Naive thymus-derived CD4-positive, alpha-beta T cell (primary cell): ENCODE measurements at regions of chr14 and their contacts with region 1.

Region 1: GRCh38 chr14:50060871-50061663 is 55.3 kb downstream of the VCPKMT start:
- DNase-seq: peak in 2 of 9 donors; percentile 27 to 61
- ATAC-seq: no peak
- H3K4me3 ChIP-seq: peak overlapping the region; percentile 53
- H3K4me3 Mint-ChIP-seq: peak overlapping the region; percentile 74 to 94 (median 89)
- H3K27ac ChIP-seq: peak overlapping the region; percentile 79
- H3K27ac Mint-ChIP-seq: peak overlapping the region; percentile 96 to 100 (median 99)
- H3K4me1 ChIP-seq: peaks cover 61 to 69% of the 10 kb centered on the region in 2 donors
- H3K4me1 Mint-ChIP-seq: peaks cover 70 to 93% (median 89%) of the 10 kb centered on the region in 7 donors
- H3K27me3 ChIP-seq: no peaks in the 10 kb centered on the region
- H3K27me3 Mint-ChIP-seq: no peaks in the 10 kb centered on the region

Region 2: GRCh38 chr14:49633640-49634546 is 427.2 kb before region 1 on chr14:
- CTCF ChIA-PET with region 1: interaction called, 6 read pairs
- POLR2A ChIA-PET with region 1: no interaction called
- intact Hi-C with region 1: loop called in 1 of 2 experiments (anchors 1 kb)
- DNase-seq: peak; percentile 89 to 96 (median 93)
- ATAC-seq: peak; percentile 92
- H3K4me3 ChIP-seq: peak overlapping the region; percentile 99
- H3K4me3 Mint-ChIP-seq: peak overlapping the region; percentile 81 to 99 (median 96)
- H3K27ac ChIP-seq: peak overlapping the region; percentile 96
- H3K27ac Mint-ChIP-seq: peak overlapping the region; percentile 71 to 96 (median 90)
- H3K4me1 ChIP-seq: peaks cover 19 to 29% of the 10 kb centered on the region in 2 donors
- H3K4me1 Mint-ChIP-seq: peaks cover 35 to 71% (median 52%) of the 10 kb centered on the region in 7 donors
- H3K27me3 ChIP-seq: no peaks in the 10 kb centered on the region
- H3K27me3 Mint-ChIP-seq: no peaks in the 10 kb centered on the region

Region 3: DNA sequence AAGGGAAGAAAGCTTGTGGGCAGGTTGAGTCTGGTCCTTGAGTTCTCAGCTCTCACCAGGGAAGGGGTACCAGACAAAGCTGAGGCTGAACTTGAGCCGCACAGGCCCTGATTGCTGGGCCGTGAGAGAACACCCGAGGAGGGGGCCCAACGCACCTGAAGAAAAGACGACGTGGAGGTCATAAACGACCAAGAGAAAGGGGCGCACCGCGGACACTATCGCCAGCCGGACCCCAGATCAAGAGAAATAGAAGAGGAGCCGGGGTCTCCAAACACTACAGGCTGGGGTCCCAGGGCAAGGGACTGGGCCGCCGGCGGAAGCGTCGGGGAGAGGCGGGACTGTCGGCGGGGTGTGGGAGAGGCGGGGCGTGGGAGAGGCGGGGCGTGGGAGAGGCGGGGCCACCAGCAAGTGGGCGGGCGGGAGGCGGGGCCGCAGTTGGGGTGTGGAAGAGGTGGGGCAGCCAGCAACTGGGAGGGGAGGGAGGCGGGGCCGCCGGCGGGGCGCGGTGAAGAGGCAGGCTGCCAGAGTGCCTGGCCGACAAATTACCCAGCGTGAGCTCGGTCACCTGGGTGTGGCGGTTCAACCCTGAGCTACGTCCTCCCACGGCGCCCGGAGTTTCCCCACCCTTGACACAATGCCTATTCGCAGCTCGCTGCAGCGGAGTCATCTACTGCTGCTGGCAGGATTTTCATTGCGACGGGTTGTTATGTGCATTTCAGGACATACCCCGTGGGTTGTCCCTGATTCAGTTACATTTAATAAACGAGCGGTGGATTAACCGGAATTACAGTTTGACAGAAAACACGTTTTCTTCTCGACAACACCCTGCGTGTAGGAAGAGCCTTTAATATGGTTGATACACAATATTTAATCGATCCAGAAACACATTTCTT is 193.0 kb before region 1 on chr14:
- CTCF ChIA-PET with region 1: interaction called, 51 read pairs
- POLR2A ChIA-PET with region 1: interaction called, 155 read pairs
- intact Hi-C with region 1: loop called in 1 of 2 experiments (anchors 1 kb)
- DNase-seq: peak; percentile 87 to 97 (median 93)
- ATAC-seq: peak; percentile 96
- H3K4me3 ChIP-seq: peak overlapping the region; percentile 75
- H3K4me3 Mint-ChIP-seq: peak overlapping the region; percentile 79 to 95 (median 90)
- H3K27ac ChIP-seq: peak overlapping the region; percentile 91
- H3K27ac Mint-ChIP-seq: peak overlapping the region; percentile 93 to 99 (median 97)
- H3K4me1 ChIP-seq: peaks cover 31 to 35% of the 10 kb centered on the region in 2 donors
- H3K4me1 Mint-ChIP-seq: peaks cover 9 to 31% (median 17%) of the 10 kb centered on the region in 7 donors
- H3K27me3 ChIP-seq: no peaks in the 10 kb centered on the region
- H3K27me3 Mint-ChIP-seq: no peaks in the 10 kb centered on the region

Region 4: DNA sequence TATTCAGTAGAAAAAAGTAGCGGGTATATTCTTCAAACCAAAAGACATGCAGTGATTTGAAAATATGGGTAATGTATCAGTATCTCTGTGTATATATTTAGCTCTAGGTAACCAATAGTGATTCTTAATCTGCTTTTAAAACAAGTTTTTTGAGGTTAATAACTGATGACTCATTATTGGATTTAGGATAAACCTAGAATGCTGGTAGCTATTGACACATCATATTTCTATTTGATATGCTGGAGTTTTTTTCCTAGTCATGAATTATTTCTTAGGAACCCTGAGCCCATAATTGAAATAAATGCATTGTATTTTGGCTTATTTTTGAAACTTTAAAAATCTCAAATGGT is 152.7 kb before region 1 on chr14:
- CTCF ChIA-PET with region 1: no interaction called
- POLR2A ChIA-PET with region 1: no interaction called
- intact Hi-C with region 1: no loop called
- DNase-seq: no peak
- ATAC-seq: no peak
- H3K4me3 ChIP-seq: no peak overlapping the region
- H3K4me3 Mint-ChIP-seq: peak overlapping the region in 1 of 10 donors; percentile 30
- H3K27ac ChIP-seq: no peak overlapping the region
- H3K27ac Mint-ChIP-seq: peak overlapping the region in 1 of 9 donors; percentile 46
- H3K4me1 ChIP-seq: peaks cover 0 to 14% of the 10 kb centered on the region in 2 donors
- H3K4me1 Mint-ChIP-seq: peaks cover 8 to 44% (median 24%) of the 10 kb centered on the region in 7 donors
- H3K27me3 ChIP-seq: no peaks in the 10 kb centered on the region
- H3K27me3 Mint-ChIP-seq: no peaks in the 10 kb centered on the region

Region 5: GRCh38 chr14:49940808-49941421 is 120.2 kb before region 1 on chr14:
- CTCF ChIA-PET with region 1: interaction called, 9 read pairs
- POLR2A ChIA-PET with region 1: interaction called, 10 read pairs
- intact Hi-C with region 1: no loop called
- DNase-seq: peak in 6 of 9 donors; percentile 25 to 63 (median 46)
- ATAC-seq: peak; percentile 64
- H3K4me3 ChIP-seq: peak overlapping the region; percentile 24
- H3K4me3 Mint-ChIP-seq: peak overlapping the region in 9 of 10 donors; percentile 18 to 72 (median 66)
- H3K27ac ChIP-seq: peak overlapping the region; percentile 39
- H3K27ac Mint-ChIP-seq: peak overlapping the region; percentile 27 to 90 (median 85)
- H3K4me1 ChIP-seq: peaks cover 31 to 36% of the 10 kb centered on the region in 2 donors
- H3K4me1 Mint-ChIP-seq: peaks cover 20 to 71% (median 59%) of the 10 kb centered on the region in 7 donors
- H3K27me3 ChIP-seq: no peaks in the 10 kb centered on the region
- H3K27me3 Mint-ChIP-seq: no peaks in the 10 kb centered on the region

Region 6: GRCh38 chr14:50038398-50039119 is 22.5 kb before region 1 on chr14:
- CTCF ChIA-PET with region 1: interaction called, 27 read pairs
- POLR2A ChIA-PET with region 1: interaction called, 102 read pairs
- intact Hi-C with region 1: loop called (anchors 1 kb)
- DNase-seq: peak in 1 of 9 donors; percentile 69
- ATAC-seq: peak; percentile 79
- H3K4me3 ChIP-seq: no peak overlapping the region
- H3K4me3 Mint-ChIP-seq: peak overlapping the region in 3 of 10 donors; percentile 40 to 59 (median 53)
- H3K27ac ChIP-seq: no peak overlapping the region
- H3K27ac Mint-ChIP-seq: peak overlapping the region in 8 of 9 donors; percentile 36 to 95 (median 83)
- H3K4me1 ChIP-seq: peaks cover 46 to 52% of the 10 kb centered on the region in 2 donors
- H3K4me1 Mint-ChIP-seq: peaks cover 33 to 68% (median 54%) of the 10 kb centered on the region in 7 donors
- H3K27me3 ChIP-seq: no peaks in the 10 kb centered on the region
- H3K27me3 Mint-ChIP-seq: no peaks in the 10 kb centered on the region

Region 7: GRCh38 chr14:50085570-50086320 is 24.7 kb after region 1 on chr14:
- CTCF ChIA-PET with region 1: interaction called, 23 read pairs
- POLR2A ChIA-PET with region 1: interaction called, 131 read pairs
- intact Hi-C with region 1: loop called (anchors 1 kb)
- DNase-seq: peak in 1 of 9 donors; percentile 45
- ATAC-seq: no peak
- H3K4me3 ChIP-seq: no peak overlapping the region
- H3K4me3 Mint-ChIP-seq: peak overlapping the region; percentile 56 to 80 (median 70)
- H3K27ac ChIP-seq: peak overlapping the region; percentile 97
- H3K27ac Mint-ChIP-seq: peak overlapping the region; percentile 86 to 97 (median 90)
- H3K4me1 ChIP-seq: peaks cover 86 to 94% of the 10 kb centered on the region in 2 donors
- H3K4me1 Mint-ChIP-seq: peaks cover 65 to 97% (median 91%) of the 10 kb centered on the region in 7 donors
- H3K27me3 ChIP-seq: no peaks in the 10 kb centered on the region
- H3K27me3 Mint-ChIP-seq: no peaks in the 10 kb centered on the region

Region 8: DNA sequence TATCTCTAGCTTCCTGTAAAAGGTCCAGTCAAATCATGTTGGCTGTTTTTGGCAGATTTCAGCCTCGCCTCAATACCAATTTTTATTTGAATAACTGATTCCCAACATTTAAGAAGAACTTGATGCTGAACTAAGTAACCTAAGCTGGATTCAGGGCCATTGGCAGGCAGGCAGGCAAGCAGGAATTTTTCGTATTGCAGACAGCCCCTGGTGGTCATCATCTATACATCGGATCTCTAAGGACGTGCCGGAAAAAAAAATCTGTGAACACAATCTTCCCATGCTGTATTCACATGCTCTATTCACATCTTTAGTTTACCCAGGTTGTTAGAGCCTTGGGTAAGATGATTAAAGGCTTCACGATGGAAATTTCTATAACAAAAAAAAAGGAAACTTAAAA is 48.3 kb after region 1 on chr14:
- CTCF ChIA-PET with region 1: interaction called, 16 read pairs
- POLR2A ChIA-PET with region 1: interaction called, 75 read pairs
- intact Hi-C with region 1: loop called (anchors 1 kb)
- DNase-seq: no peak
- ATAC-seq: no peak
- H3K4me3 ChIP-seq: no peak overlapping the region
- H3K4me3 Mint-ChIP-seq: no peak overlapping the region
- H3K27ac ChIP-seq: no peak overlapping the region
- H3K27ac Mint-ChIP-seq: no peak overlapping the region
- H3K4me1 ChIP-seq: peaks cover under 1 to 4% of the 10 kb centered on the region in 2 donors
- H3K4me1 Mint-ChIP-seq: peaks cover 0 to 21% (median 16%) of the 10 kb centered on the region in 7 donors
- H3K27me3 ChIP-seq: no peaks in the 10 kb centered on the region
- H3K27me3 Mint-ChIP-seq: no peaks in the 10 kb centered on the region

Region 9: DNA sequence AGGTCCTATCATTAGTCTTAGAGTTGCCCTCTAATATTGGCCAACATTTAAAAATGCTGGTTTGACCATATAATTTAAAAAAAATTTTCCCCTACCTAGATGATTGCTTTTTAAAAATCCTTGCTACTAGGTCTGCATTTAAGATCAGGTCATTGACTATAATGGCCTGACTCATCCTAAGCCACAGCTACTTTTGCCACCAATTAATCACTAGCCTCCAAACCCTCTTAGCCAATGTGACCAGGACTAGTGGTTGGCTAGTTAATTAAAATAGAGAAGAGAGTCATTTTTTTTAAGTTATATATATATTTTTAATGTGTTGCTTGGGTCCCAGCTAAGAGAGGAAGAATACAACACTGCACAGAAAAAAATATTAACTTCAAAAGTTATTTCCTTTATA is 112.8 kb after region 1 on chr14:
- CTCF ChIA-PET with region 1: no interaction called
- POLR2A ChIA-PET with region 1: no interaction called
- intact Hi-C with region 1: no loop called
- DNase-seq: no peak
- ATAC-seq: no peak
- H3K4me3 ChIP-seq: no peak overlapping the region
- H3K4me3 Mint-ChIP-seq: no peak overlapping the region
- H3K27ac ChIP-seq: no peak overlapping the region
- H3K27ac Mint-ChIP-seq: no peak overlapping the region
- H3K4me1 ChIP-seq: no peaks in the 10 kb centered on the region
- H3K4me1 Mint-ChIP-seq: no peaks in the 10 kb centered on the region
- H3K27me3 ChIP-seq: no peaks in the 10 kb centered on the region
- H3K27me3 Mint-ChIP-seq: no peaks in the 10 kb centered on the region